Cardiac septum (tissue), 1 donor: ENCODE measurements at regions of chr13 and their contacts with region 1.

Region 1: DNA sequence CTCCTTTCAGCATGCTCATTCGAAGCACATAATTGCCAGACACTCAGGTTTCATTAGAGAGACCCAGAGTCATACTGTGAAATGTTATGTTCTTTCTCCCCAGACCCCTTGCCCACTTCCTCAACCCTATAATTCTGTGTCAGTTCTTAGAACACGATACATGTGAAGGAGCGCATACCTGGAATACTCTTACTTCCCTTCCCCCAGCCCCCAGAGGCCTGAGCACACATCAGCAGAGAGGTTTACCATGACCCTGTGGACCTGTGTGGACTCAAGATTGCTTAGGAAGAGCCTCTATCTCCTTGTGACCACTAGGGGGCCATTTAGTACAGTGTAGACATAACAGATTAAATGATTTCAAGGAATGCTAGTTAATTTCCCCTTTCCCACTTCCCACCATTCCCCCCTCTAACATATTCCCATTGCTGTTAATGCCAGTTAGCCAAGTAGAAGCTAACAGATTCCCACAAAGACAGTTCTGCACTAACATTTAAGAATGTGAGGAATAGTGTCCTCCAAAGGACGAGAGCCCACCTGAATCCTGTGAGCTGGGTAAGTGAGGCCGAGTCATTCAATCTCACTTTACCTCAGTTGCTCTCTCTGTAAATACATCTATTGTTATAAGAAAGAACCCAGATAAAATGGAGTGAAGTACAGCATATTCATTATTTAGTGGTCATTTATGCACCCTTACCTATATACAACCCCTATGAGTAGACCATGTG is 154.2 kb upstream of the MAB21L1 start:
- DNase-seq: no peak

Region 2: DNA sequence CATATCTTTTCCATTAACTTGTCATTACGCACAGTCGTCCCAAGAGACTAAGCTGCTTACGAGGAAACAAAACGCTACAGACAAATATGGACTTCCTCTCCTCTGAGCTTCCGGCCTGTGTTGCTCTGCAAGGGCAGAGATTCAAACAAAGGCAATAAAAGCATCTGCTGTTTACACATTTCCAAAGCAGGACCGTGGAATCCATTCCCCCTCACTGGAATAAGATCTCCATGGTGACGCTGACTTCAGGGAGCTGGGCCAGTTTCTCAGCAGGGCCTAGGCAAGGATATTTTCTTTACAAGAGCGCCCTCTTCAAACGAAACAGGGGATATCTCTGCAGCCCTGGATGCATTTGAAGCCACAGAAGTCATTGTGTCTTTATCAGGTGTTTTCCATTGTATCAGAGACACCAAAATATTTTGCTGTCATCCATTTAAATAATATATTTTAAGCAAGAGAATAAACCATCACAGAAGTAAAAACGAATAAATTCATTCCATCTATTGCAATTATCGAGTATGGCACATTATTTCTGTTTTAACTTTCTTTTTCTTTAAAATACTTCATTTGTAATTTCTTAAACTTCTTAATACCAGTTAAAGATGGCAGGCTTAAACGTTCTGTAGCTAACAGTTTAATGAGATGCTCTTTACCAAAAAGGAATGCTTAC is 323.0 kb after region 1 on chr13:
- intact Hi-C with region 1: loop called (anchors 5 kb)
- DNase-seq: peak; percentile 83